Adrenal gland (tissue), 19 donors: ENCODE measurements at regions of chr1 and their contacts with region 1.

Region 1: GRCh38 chr1:94854458-94855306 is 34.5 kb downstream of the SLC44A3 start:
- DNase-seq: peak; percentile 88 to 97 (median 93)
- H3K4me3 ChIP-seq: peak overlapping the region in 2 of 4 donors; percentile 44 to 58
- H3K27ac ChIP-seq: peak overlapping the region in 4 of 5 donors; percentile 19 to 92 (median 78)
- H3K4me1 ChIP-seq: peaks cover 0 to 13% of the 10 kb centered on the region in 2 donors
- H3K27me3 ChIP-seq: no peaks in the 10 kb centered on the region
- CTCF ChIP-seq: peak; percentile 84 to 99 (median 95)
- POLR2A ChIP-seq: no peak

Region 2: DNA sequence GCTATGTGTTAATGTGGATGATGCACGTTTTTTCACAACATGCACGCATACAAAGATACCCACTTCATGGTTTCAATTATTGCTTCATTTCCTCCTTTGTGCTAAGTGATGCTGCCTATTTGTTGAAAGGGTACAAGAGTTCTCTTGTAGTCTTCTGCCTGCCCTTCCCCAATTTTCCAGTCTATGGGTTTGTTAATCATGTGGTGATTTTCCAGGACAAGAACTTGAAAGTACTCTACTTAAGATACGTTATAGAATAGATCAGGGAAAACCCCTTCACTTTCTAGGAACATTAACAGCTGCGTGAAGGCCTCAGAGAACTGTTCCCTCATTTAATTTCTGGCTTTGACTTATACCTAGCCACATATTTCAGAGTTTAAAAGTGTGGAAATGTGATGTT is 86.6 kb before region 1 on chr1:
- intact Hi-C with region 1: no loop called
- DNase-seq: no peak
- H3K4me3 ChIP-seq: no peak overlapping the region
- H3K27ac ChIP-seq: no peak overlapping the region
- H3K4me1 ChIP-seq: no peaks in the 10 kb centered on the region
- H3K27me3 ChIP-seq: no peaks in the 10 kb centered on the region
- CTCF ChIP-seq: no peak
- POLR2A ChIP-seq: no peak

Region 3: GRCh38 chr1:94926915-94927404 is 72.3 kb after region 1 on chr1 and contains the start of gene CNN3:
- intact Hi-C with region 1: loop called in 1 of 2 experiments (anchors 10 kb)
- DNase-seq: peak; percentile 93 to 96 (median 95)
- H3K4me3 ChIP-seq: peak within 1 kb of the TSS; percentile 41 to 94 (median 66)
- H3K27ac ChIP-seq: peak within 1 kb of the TSS; percentile 93 to 99 (median 95)
- H3K4me1 ChIP-seq: peaks cover 42 to 44% of the 10 kb centered on the region in 2 donors
- H3K27me3 ChIP-seq: no peaks in the 10 kb centered on the region
- CTCF ChIP-seq: peak in 2 of 6 experiments; percentile 10 to 19
- POLR2A ChIP-seq: peak; percentile 98 to 100
- total RNA-seq, gene CNN3: 262 to 766 (median 423) TPM

Region 4: DNA sequence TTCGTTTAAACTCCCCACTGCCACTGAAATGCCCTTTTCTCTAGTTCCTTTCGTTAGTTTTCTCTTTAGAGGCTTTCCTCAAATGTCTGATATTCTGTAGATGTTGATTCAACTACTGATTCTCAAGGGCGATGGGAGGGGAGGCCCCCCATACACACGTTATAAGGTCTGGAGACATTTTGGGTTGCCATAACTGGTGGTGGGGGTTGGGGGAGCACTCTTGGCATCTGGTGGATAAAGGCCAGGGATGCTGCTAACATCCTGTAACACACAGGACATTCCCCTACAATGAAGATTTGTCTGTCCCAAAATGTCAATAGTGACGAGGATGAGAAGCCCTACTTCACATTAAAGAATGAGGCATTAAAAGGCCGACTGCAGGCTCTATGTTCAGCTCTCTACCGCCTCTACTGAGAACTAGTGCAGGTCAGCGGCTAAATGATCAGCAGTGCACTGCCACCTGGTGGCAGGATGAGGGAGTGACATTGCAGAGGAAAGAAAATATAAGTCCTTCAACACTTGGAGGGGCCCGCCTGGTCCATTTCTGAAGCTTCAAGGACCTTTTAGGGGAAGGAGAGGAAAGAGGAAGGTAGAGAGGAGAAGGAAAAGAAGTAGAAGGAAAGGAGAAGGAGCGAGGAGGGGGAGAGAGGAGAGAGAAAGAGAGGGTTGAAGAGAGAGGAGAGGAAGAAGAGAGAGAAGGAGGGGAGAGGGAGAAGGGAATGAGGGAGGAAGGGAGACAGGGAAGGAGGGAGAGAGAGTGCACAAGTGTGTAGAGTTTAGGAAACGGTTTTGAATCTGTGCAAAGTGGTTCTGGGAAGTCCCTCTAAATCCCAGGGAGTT is 188.7 kb after region 1 on chr1:
- intact Hi-C with region 1: loop called (anchors 2 to 5 kb)
- DNase-seq: peak; percentile 79 to 96 (median 89)
- H3K4me3 ChIP-seq: no peak overlapping the region
- H3K27ac ChIP-seq: peak overlapping the region in 2 of 5 donors; percentile 65 to 76
- H3K4me1 ChIP-seq: peaks cover 8 to 21% of the 10 kb centered on the region in 2 donors
- H3K27me3 ChIP-seq: no peaks in the 10 kb centered on the region
- CTCF ChIP-seq: peak; percentile 99 to 100 (median 99)
- POLR2A ChIP-seq: no peak